ENCODE measurements at regions of chr4 and their contacts with region 1.

Region 1: GRCh38 chr4:2596611-2597010 is 60.2 kb downstream of the FAM193A start:
- DNase-seq: no peak
- ATAC-seq: no peak
- H3K4me3 ChIP-seq: no peak overlapping the region
- H3K4me3 Mint-ChIP-seq: no peak overlapping the region
- H3K27ac ChIP-seq: no peak overlapping the region
- H3K27ac Mint-ChIP-seq: peak overlapping the region; percentile 46 to 55
- H3K4me1 ChIP-seq: peaks cover 0 to 38% of the 10 kb centered on the region in 2 experiments
- H3K4me1 Mint-ChIP-seq: peaks cover 79 to 83% (median 81%) of the 10 kb centered on the region in 3 donors
- H3K27me3 ChIP-seq: no peaks in the 10 kb centered on the region
- H3K27me3 Mint-ChIP-seq: no peaks in the 10 kb centered on the region

Region 2: DNA sequence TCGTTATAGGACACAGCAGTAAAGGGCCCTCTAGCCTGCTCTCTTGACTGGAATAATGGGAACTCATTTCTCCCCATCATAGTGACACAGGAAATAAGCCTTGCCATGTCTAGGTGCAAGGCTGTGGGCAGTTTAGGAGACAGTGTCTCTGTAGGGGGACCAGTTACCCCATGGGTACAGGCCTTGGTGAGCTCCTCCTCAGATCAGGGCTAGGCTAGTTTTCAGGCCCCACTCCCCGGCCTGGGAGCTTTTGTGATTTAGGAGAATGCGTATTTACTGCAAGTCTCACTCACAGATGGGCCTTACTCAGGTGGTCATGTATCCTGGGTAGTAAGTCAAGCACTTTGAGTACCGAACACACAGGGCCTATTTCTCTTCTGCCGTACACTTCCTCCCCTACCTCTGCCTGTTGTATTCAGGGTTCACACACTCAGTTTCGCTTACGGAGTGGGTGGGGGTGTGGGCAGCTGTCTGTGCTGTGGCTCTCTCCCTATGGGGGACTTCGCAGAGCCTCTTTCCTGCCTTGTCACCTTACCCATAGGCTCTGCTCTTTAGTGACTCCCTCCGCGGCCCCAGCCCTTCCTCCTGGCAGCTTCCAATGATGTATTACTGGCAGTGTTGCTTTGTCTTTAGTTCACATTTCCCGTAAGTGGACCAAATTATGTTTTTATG is 25.9 kb before region 1 on chr4:
- CTCF ChIA-PET with region 1: interaction called in 1 of 2 experiments, 4 read pairs
- POLR2A ChIA-PET with region 1: interaction called in 1 of 2 experiments, 12 read pairs
- DNase-seq: peak; percentile 4 to 86 (median 72)
- ATAC-seq: peak; percentile 90 to 100 (median 92)
- H3K4me3 ChIP-seq: no peak overlapping the region
- H3K4me3 Mint-ChIP-seq: peak overlapping the region; percentile 14 to 61 (median 42)
- H3K27ac ChIP-seq: peak overlapping the region; percentile 39
- H3K27ac Mint-ChIP-seq: peak overlapping the region; percentile 6 to 73
- H3K4me1 ChIP-seq: peaks cover 9 to 33% of the 10 kb centered on the region in 2 experiments
- H3K4me1 Mint-ChIP-seq: peaks cover 60 to 68% (median 63%) of the 10 kb centered on the region in 3 donors
- H3K27me3 ChIP-seq: no peaks in the 10 kb centered on the region
- H3K27me3 Mint-ChIP-seq: no peaks in the 10 kb centered on the region

Region 3: DNA sequence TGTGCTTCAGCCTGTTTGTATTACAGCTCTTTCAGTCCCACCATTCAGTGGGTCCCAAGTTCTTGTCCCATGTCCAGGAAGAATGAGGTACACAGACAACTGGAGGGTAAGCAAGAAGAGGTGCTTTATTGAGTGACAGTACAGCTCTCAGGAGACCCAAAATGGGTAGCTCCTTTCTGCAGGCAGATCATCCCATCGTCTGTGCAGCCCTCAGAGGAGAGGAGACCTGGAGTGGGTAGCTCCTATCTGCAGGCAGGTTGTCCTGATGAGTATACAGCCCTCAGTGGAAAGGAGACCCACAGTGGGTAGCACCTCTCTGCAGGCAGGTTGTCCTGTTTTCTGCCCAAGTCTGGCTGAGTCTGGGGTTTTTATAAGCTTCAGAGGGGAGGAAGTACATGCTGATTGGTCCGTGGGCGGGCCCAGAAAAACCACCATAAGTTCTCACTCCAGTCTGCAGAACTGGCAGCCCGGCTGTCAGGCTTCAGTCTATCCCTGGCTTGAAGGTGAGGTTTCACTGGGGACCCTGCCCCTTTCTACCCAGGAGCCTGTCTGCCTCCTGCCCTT is 384.7 kb after region 1 on chr4:
- CTCF ChIA-PET with region 1: no interaction called
- POLR2A ChIA-PET with region 1: no interaction called
- DNase-seq: no peak
- ATAC-seq: no peak
- H3K4me3 ChIP-seq: peak overlapping the region in 1 of 2 donors; percentile 18
- H3K4me3 Mint-ChIP-seq: no peak overlapping the region
- H3K27ac ChIP-seq: no peak overlapping the region
- H3K27ac Mint-ChIP-seq: no peak overlapping the region
- H3K4me1 ChIP-seq: peaks cover 0 to 2% of the 10 kb centered on the region in 2 experiments
- H3K4me1 Mint-ChIP-seq: peaks cover 0 to 4% (median 2%) of the 10 kb centered on the region in 3 donors
- H3K27me3 ChIP-seq: peaks cover 0 to 6% of the 10 kb centered on the region in 2 experiments
- H3K27me3 Mint-ChIP-seq: peaks cover 0 to 2% of the 10 kb centered on the region in 2 donors

Measured in T-cell (primary cell).